ENCODE measurements at regions of chr6 and their contacts with region 1.

Region 1: GRCh38 chr6:157107915-157108651 is 215.2 kb downstream of the TMEM242 start:
- DNase-seq: peak; percentile 42
- ATAC-seq: peak; percentile 87
- H3K4me3 Mint-ChIP-seq: no peak overlapping the region
- H3K27ac Mint-ChIP-seq: peak overlapping the region; percentile 38
- H3K4me1 Mint-ChIP-seq: peaks cover 53% of the 10 kb centered on the region
- H3K27me3 Mint-ChIP-seq: no peaks in the 10 kb centered on the region

Region 2: GRCh38 chr6:156866220-156867015 is 241.7 kb before region 1 on chr6:
- CTCF ChIA-PET with region 1: no interaction called
- POLR2A ChIA-PET with region 1: no interaction called
- intact Hi-C with region 1: loop called in 1 of 2 experiments (anchors 5 kb)
- DNase-seq: peak; percentile 65
- ATAC-seq: peak; percentile 75
- H3K4me3 Mint-ChIP-seq: peak overlapping the region; percentile 11
- H3K27ac Mint-ChIP-seq: peak overlapping the region; percentile 65
- H3K4me1 Mint-ChIP-seq: peaks cover 75% of the 10 kb centered on the region
- H3K27me3 Mint-ChIP-seq: no peaks in the 10 kb centered on the region

Region 3: DNA sequence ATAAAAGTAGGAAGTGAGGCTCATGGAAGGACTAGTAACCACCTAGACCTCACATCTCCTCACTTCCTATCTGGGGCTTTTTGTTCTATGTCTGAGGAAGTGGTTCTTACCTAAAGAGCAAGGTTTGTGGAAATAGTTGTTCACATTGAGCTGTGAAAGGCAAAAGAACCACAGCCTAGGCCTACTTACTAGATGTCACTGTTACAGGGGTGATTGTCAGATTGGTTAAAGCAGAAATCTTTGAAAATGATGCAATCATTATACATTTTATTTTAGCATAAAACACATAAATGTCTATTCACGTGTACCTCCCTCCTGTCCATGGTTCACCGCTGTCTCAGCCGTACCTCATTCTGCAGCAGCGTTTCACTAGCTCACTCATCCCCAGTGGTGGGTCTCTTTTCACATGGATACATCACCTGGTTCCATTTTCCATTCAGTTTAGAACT is 53.5 kb before region 1 on chr6:
- CTCF ChIA-PET with region 1: no interaction called
- POLR2A ChIA-PET with region 1: no interaction called
- intact Hi-C with region 1: loop called (anchors 1 kb)
- DNase-seq: peak; percentile 49
- ATAC-seq: peak; percentile 80
- H3K4me3 Mint-ChIP-seq: peak overlapping the region; percentile 15
- H3K27ac Mint-ChIP-seq: peak overlapping the region; percentile 89
- H3K4me1 Mint-ChIP-seq: peaks cover 41% of the 10 kb centered on the region
- H3K27me3 Mint-ChIP-seq: no peaks in the 10 kb centered on the region

Region 4: DNA sequence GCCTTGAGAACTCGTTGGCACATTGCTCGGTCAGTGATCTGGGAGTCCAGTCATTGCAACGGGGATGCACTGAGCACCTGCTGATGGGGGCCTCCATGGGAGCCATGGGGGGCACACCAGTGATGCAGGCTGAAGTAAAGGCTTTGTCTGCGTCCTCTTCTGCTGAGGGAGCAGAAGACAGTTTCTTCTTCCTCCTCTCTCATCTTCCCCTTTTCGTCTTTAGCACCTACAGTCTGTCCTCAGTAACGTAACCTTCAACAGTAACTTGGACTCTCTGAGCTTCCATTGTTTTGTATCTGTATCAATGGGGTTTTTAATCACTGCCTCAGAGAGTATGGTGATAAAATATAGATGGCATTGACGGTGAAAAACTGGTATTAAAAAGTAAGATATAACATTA is 24.7 kb before region 1 on chr6:
- CTCF ChIA-PET with region 1: no interaction called
- POLR2A ChIA-PET with region 1: no interaction called
- intact Hi-C with region 1: no loop called
- DNase-seq: no peak
- ATAC-seq: no peak
- H3K4me3 Mint-ChIP-seq: no peak overlapping the region
- H3K27ac Mint-ChIP-seq: no peak overlapping the region
- H3K4me1 Mint-ChIP-seq: peaks cover 32% of the 10 kb centered on the region
- H3K27me3 Mint-ChIP-seq: no peaks in the 10 kb centered on the region

Region 5: DNA sequence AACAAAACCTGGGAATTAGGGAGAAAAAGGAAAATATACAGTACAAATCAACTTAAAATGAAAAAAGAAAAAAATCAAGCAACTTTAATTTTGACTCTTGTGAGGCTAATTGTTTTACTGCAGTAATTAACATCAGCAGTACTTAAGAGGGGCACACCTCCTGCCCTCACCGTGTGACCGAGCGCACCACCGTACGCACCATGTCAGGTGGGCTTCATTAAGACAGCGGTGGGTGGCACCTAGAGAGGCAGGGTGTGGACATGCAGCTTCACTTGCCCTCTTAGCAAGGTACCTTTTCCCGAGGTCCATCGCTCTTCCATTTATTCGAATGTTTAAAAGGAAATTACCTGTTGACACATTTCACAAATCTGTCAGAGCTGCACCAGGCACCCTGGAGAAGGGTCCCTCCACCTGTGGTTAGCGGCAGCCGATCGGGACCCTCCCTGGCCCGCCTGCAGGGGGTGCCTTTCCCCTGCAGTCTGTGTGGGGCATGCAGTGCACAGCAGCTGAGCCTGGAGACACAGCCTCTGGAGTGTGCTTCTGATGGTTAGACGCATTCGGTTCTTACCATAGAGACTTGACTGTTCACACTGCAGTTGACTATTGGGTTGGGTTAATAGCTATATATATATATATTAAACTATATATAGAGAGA is 31.1 kb after region 1 on chr6:
- CTCF ChIA-PET with region 1: interaction called, 3 read pairs
- POLR2A ChIA-PET with region 1: interaction called, 11 read pairs
- intact Hi-C with region 1: no loop called
- DNase-seq: no peak
- ATAC-seq: no peak
- H3K4me3 Mint-ChIP-seq: no peak overlapping the region
- H3K27ac Mint-ChIP-seq: no peak overlapping the region
- H3K4me1 Mint-ChIP-seq: peaks cover 19% of the 10 kb centered on the region
- H3K27me3 Mint-ChIP-seq: no peaks in the 10 kb centered on the region

Region 6: DNA sequence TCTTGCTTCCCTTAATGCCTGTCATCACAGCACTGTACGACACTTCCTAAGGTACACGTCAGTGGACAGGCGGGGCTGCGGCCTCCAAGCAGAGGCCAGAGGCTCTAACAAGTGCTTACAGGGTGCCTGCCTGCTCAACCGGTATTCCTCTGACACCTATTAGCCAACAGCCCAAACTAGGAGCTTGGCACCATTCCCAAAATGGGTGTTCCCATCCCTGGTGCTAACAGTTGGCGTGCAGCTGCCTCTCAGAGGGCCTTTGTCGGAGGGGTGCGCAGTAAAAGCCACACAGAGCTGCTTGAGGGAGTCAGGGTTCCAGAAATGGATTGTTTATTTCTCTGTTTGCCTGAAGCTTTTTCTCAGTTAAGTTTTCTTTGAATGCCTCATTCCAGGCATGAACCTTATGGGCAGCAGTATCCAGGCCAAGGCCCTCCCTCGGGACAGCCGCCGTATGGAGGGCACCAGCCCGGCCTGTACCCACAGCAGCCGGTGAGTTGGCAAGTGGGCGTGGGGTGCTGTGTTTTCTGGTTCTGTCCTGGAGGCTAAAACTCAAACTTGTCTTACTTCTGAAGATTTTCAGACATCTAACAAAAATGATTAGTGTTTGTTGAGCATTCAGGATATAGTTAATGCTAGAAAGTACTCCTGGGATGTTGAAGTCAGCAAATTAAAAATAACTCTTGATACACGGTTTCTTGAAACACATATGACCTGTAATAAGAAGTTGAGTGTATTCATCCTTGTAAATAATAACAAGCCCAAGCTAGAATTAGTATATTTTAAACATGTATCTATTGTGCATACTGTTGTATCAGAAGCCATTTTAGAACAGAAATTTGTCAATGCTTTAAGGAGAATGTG is 90.6 kb after region 1 on chr6:
- CTCF ChIA-PET with region 1: no interaction called
- POLR2A ChIA-PET with region 1: no interaction called
- intact Hi-C with region 1: no loop called
- DNase-seq: no peak
- ATAC-seq: no peak
- H3K4me3 Mint-ChIP-seq: no peak overlapping the region
- H3K27ac Mint-ChIP-seq: no peak overlapping the region
- H3K4me1 Mint-ChIP-seq: peaks cover 12% of the 10 kb centered on the region
- H3K27me3 Mint-ChIP-seq: no peaks in the 10 kb centered on the region

Region 7: GRCh38 chr6:157898169-157898568 is 790.1 kb after region 1 on chr6:
- CTCF ChIA-PET with region 1: no interaction called
- POLR2A ChIA-PET with region 1: no interaction called
- intact Hi-C with region 1: loop called in 1 of 2 experiments (anchors 10 kb)
- DNase-seq: peak; percentile 59
- ATAC-seq: peak; percentile 82
- H3K4me3 Mint-ChIP-seq: no peak overlapping the region
- H3K27ac Mint-ChIP-seq: no peak overlapping the region
- H3K4me1 Mint-ChIP-seq: peaks cover 14% of the 10 kb centered on the region
- H3K27me3 Mint-ChIP-seq: no peaks in the 10 kb centered on the region

Measured in activated CD4-positive, alpha-beta T cell treated with anti-CD3 and anti-CD28 coated beads for 36 hours (primary cell).